ENCODE measurements at regions of chr15 and their contacts with region 1.

Region 1: GRCh38 chr15:92714477-92715401 is 59.2 kb upstream of the FAM174B start:
- DNase-seq: peak; percentile 15
- ATAC-seq: peak; percentile 93
- H3K4me3 ChIP-seq: peak overlapping the region; percentile 64
- H3K27ac ChIP-seq: no peak overlapping the region
- H3K4me1 ChIP-seq: 0 out of 2 replicates have a peak, but pooled peaks cover 3% of the 10 kb centered on the region
- H3K27me3 ChIP-seq: peaks cover 0 to 3% of the 10 kb centered on the region in 2 experiments; a peak in 1 of 4 replicates
- CTCF ChIP-seq: peak; percentile 81 to 96 (median 81); a peak in 5 of 6 replicates
- EP300 ChIP-seq: no peak
- POLR2A ChIP-seq: no peak
- RAD21 ChIP-seq: peak; percentile 91

Region 2: GRCh38 chr15:92097474-92098178 is 617.1 kb before region 1 on chr15:
- CTCF ChIA-PET with region 1: interaction called, 3 read pairs
- POLR2A ChIA-PET with region 1: no interaction called
- RAD21 ChIA-PET with region 1: no interaction called
- SMC1A ChIA-PET with region 1: no interaction called
- in situ Hi-C with region 1: loop called (anchors 5 kb)
- intact Hi-C with region 1: loop called (anchors 2 kb)
- DNase-seq: peak; percentile 20
- ATAC-seq: peak; percentile 89
- H3K4me3 ChIP-seq: no peak overlapping the region
- H3K27ac ChIP-seq: no peak overlapping the region
- H3K4me1 ChIP-seq: peaks cover 27% of the 10 kb centered on the region
- H3K27me3 ChIP-seq: no peaks in the 10 kb centered on the region
- CTCF ChIP-seq: peak; percentile 82 to 90 (median 85)
- EP300 ChIP-seq: no peak
- POLR2A ChIP-seq: no peak
- RAD21 ChIP-seq: peak; percentile 86

Region 3: GRCh38 chr15:92391640-92392039 is 323.1 kb before region 1 on chr15:
- CTCF ChIA-PET with region 1: interaction called, 6 read pairs
- POLR2A ChIA-PET with region 1: no interaction called
- RAD21 ChIA-PET with region 1: no interaction called
- SMC1A ChIA-PET with region 1: no interaction called
- in situ Hi-C with region 1: no loop called
- intact Hi-C with region 1: loop called (anchors 2 kb)
- DNase-seq: no peak
- ATAC-seq: peak; percentile 71
- H3K4me3 ChIP-seq: no peak overlapping the region
- H3K27ac ChIP-seq: no peak overlapping the region
- H3K4me1 ChIP-seq: no peaks in the 10 kb centered on the region
- H3K27me3 ChIP-seq: peaks cover 22% of the 10 kb centered on the region in 2 experiments
- CTCF ChIP-seq: peak; percentile 33 to 51 (median 36); a peak in 4 of 6 replicates
- EP300 ChIP-seq: no peak
- POLR2A ChIP-seq: no peak
- RAD21 ChIP-seq: peak; percentile 28; the same call in 1 of the 2 replicates

Region 4: GRCh38 chr15:92527197-92527596 is 187.5 kb before region 1 on chr15:
- CTCF ChIA-PET with region 1: interaction called, 95 read pairs
- POLR2A ChIA-PET with region 1: no interaction called
- RAD21 ChIA-PET with region 1: interaction called, 40 read pairs
- SMC1A ChIA-PET with region 1: interaction called, 29 read pairs
- in situ Hi-C with region 1: loop called (anchors 5 kb)
- intact Hi-C with region 1: loop called (anchors 1 kb)
- DNase-seq: no peak
- ATAC-seq: no peak
- H3K4me3 ChIP-seq: no peak overlapping the region
- H3K27ac ChIP-seq: no peak overlapping the region
- H3K4me1 ChIP-seq: no peaks in the 10 kb centered on the region
- H3K27me3 ChIP-seq: no peaks in the 10 kb centered on the region; a peak in 1 of 4 replicates
- CTCF ChIP-seq: no peak
- EP300 ChIP-seq: no peak
- POLR2A ChIP-seq: no peak
- RAD21 ChIP-seq: no peak

Region 5: DNA sequence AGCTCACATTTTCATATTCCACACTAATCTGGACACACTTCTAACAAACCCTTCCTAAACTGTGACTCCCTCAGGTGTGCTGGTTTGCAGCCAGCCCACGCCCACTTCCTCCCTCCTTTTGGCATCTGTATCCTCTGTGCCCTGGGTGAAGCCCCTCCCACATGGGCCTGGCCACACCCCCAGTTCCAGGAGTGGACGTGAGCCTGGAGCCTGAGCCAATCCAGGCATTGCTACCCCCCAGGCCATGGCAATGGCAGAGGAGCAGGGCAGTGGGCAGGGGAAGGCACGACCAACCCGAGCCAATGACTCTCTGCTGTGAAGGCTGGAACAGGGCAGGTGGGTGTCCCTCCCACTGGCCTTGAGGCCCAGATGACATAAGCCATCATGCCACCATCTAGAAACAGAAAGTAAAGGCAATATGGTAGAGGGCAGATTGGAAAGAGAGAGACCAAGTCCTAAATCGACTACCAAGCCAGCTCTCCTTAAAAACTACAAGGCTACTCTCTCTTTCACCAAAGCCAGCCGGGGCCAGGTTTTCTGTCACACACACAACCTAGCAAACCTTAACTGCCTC is 77.7 kb before region 1 on chr15:
- CTCF ChIA-PET with region 1: no interaction called
- POLR2A ChIA-PET with region 1: no interaction called
- RAD21 ChIA-PET with region 1: no interaction called
- SMC1A ChIA-PET with region 1: no interaction called
- in situ Hi-C with region 1: no loop called
- intact Hi-C with region 1: no loop called
- DNase-seq: no peak
- ATAC-seq: peak; percentile 83
- H3K4me3 ChIP-seq: no peak overlapping the region
- H3K27ac ChIP-seq: peak overlapping the region; percentile 62; the same call in 1 of the 2 replicates
- H3K4me1 ChIP-seq: peaks cover 29% of the 10 kb centered on the region
- H3K27me3 ChIP-seq: no peaks in the 10 kb centered on the region
- CTCF ChIP-seq: no peak
- EP300 ChIP-seq: no peak
- POLR2A ChIP-seq: no peak
- RAD21 ChIP-seq: no peak

Region 6: DNA sequence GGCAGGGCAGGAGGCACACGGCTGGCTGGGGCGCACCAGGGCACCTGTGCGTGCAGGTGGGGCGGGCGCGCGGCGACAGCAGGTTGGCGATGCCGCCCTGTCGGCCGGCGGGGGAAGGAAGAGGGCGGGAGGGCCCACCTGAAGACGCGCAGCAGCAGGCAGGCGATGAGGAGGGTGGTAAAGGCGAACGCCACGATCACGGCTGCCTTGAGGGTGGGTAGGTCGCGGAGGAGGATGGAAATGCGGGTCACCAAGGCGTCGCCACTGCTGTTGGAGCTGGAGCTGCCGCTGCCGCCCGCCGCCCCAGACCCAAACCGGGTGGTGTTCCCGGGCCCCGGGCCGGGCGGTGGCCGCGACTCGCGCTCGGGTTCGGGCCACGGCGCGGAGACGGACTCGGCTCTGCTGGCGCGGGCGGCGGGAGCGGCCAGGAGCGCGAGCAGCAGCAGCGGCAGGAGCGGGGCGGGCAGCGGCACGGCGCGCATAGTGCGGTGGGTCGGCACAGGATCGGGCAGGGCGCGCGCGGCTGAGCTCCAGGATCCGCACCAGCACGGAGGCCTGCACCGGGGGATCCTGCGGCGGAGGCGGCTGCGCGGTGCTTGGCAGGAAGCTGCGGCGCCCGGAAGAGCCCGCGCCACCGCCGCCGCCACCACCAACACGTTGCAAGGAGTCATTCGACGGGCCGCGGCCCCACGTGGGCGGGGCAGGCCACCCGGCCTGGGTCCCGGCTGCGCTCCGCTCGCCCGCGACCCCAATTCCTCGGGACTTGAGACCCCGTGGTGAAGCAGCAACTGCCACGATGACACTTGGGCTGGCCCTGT is 59.4 kb before region 1 on chr15 and contains the start of gene FAM174B:
- CTCF ChIA-PET with region 1: interaction called, 10 read pairs
- POLR2A ChIA-PET with region 1: no interaction called
- RAD21 ChIA-PET with region 1: interaction called, 5 read pairs
- SMC1A ChIA-PET with region 1: interaction called, 4 read pairs
- in situ Hi-C with region 1: no loop called
- intact Hi-C with region 1: no loop called
- DNase-seq: no peak
- ATAC-seq: peak; percentile 76
- H3K4me3 ChIP-seq: peak within 1 kb of the TSS; percentile 65
- H3K27ac ChIP-seq: peak within 1 kb of the TSS; percentile 38
- H3K4me1 ChIP-seq: peaks cover 4% of the 10 kb centered on the region; the same call in 1 of the 2 replicates
- H3K27me3 ChIP-seq: no peaks in the 10 kb centered on the region
- CTCF ChIP-seq: peak in 1 of 3 experiments; percentile 17; a peak in 1 of 6 replicates
- EP300 ChIP-seq: no peak
- POLR2A ChIP-seq: peak; percentile 80
- RAD21 ChIP-seq: no peak
- polyA plus RNA-seq, gene FAM174B: 0.71 to 2.4 TPM